ENCODE measurements at regions of chr1 and their contacts with region 1.

Region 1: GRCh38 chr1:236862615-236863211 is 67.6 kb downstream of the MTR start:
- DNase-seq: no peak
- H3K27ac ChIP-seq: no peak overlapping the region
- CTCF ChIP-seq: no peak

Region 2: DNA sequence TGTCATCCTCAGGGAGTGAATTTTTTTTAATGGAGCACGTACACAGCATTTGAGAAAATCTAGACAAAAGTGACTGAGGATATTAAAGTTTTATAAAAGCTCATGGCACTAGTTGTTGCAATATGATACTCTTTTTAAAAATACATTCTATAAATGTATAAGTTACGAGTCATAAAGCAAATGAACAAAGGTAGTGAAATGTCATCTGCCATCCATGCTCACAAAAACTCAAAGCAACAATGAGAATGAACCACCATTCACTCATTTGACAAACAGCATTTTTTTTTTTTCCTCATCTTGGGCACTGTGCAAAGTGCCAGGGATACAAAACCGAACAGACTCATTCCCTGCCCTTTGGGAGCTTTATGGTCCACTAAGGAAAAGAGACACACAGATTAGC is 681.7 kb before region 1 on chr1:
- CTCF ChIA-PET with region 1: interaction called, 10 read pairs
- POLR2A ChIA-PET with region 1: no interaction called
- DNase-seq: peak; percentile 13
- H3K27ac ChIP-seq: no peak overlapping the region
- CTCF ChIP-seq: no peak

Region 3: DNA sequence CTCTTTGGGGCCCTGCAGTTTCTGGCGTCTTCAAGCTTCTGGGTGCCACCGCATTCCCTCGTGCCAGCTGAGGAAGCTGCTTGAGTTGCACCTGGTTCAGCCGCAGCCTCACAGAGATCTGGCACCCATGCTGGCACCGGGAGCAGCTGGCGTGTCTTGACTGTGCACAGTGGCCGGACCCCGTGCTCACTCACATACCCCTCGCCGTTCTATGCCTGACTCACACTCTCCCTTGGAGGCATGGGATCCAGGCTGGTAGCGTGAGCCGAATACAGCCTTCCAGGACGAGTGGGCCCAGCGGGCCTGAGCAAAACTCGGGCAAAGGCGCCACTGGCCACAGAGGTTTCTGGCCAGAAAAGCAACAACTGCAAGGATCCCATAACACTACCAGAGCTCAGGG is 76.3 kb before region 1 on chr1:
- CTCF ChIA-PET with region 1: no interaction called
- POLR2A ChIA-PET with region 1: no interaction called
- DNase-seq: no peak
- H3K27ac ChIP-seq: no peak overlapping the region
- CTCF ChIP-seq: no peak

Measured in RWPE1 (cell line).